ENCODE measurements at regions of chr10 and their contacts with region 1.

Region 1: DNA sequence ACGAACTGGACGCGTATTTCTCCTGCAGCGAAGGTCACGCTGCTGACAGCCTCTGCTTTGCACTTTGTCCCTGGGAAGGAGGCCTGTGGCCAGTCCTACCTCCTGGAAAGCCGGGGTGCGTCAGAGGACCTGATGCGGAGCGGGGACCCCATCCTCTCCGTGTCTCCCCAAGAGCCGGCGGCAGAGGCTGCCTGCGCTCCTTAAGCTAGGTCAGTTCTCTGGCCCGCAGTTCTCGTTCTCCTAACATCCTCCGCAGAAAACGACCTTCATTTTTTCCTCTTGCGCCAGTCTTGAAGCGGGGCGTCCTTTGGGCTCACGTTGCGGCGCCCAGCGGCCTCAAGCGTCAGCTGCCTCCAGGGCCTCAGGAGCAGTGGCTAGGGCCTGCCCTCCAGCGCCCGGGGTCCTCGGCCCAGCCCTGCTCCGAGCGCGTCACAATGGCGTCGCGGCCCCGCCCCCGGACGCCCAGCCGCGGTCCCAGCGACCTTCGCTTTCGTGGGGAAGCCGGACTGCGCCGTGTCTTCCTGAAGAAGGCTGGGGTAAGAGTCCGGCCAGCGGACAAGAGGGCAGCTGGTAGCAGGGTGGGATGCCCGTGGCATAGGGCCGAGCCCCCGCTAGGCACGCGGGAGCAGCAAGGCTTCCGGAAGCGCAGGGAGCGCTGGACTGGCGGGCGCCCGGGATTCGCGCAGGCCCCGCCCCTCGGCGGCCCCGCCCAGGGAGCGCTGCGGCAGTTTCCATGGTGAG is at the start of gene ZNF487:
- DNase-seq: peak; percentile 92 to 96 (median 94)
- H3K4me3 ChIP-seq: peak within 1 kb of the TSS; percentile 56 to 93 (median 88)
- H3K27ac ChIP-seq: peak within 1 kb of the TSS; percentile 94 to 97
- H3K4me1 ChIP-seq: peaks cover 1 to 10% (median 4%) of the 10 kb centered on the region in 4 experiments
- H3K27me3 ChIP-seq: no peaks in the 10 kb centered on the region

Region 2: GRCh38 chr10:43420369-43421200 is 16.0 kb before region 1 on chr10:
- CTCF ChIA-PET with region 1: interaction called, 33 read pairs
- POLR2A ChIA-PET with region 1: interaction called, 4 read pairs
- DNase-seq: peak; percentile 92 to 96 (median 96)
- H3K4me3 ChIP-seq: peak overlapping the region; percentile 9 to 74 (median 61)
- H3K27ac ChIP-seq: peak overlapping the region; percentile 78 to 89
- H3K4me1 ChIP-seq: peaks cover 3 to 47% (median 35%) of the 10 kb centered on the region in 4 experiments
- H3K27me3 ChIP-seq: no peaks in the 10 kb centered on the region

Region 3: DNA sequence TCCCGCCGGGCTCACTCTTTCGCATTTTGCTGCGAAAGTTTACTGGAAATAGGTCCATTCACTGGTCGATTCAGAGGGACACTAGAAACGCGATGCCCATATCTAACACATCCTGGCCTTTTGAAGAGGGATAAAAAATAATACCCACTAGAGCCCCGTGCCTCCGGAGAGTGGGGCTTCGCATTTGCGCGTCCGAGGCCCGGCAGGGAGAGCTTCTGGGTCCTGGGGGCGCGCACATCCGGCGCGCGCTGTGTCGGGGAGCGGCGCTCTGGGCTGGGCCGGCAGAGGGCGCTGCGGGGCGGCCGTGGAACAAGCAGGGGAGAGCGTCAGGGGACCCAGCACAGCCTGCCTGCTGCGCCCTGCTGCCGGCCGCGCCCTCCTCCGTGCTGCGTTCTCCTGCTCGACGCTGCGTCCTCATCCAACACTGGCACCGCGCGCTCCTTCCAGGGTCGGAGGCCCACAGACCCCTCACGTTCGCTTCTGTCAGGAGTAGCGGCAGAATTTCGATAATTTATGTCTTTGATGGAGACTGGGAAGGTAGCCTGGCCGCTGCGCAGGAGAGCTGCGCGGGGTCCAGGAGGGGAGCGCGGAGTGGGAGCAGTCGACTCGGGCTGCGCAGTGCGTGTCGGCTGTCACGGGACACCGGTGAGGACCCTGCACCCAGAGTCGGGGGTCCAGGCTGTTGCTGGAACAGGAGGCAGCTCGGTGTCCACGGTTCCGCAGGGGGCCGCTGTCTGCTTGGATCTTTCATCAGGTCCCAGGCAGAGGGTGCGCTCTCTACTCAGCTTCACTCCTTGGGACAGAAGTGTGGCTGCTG is 253.6 kb after region 1 on chr10:
- CTCF ChIA-PET with region 1: no interaction called
- POLR2A ChIA-PET with region 1: no interaction called
- DNase-seq: peak; percentile 77 to 88 (median 84)
- H3K4me3 ChIP-seq: peak overlapping the region; percentile 52 to 83 (median 75)
- H3K27ac ChIP-seq: no peak overlapping the region
- H3K4me1 ChIP-seq: peaks cover 0 to 15% (median 14%) of the 10 kb centered on the region in 4 experiments
- H3K27me3 ChIP-seq: peaks cover 4 to 33% (median 11%) of the 10 kb centered on the region in 5 experiments

Measured in common myeloid progenitor, CD34-positive (primary cell).